SK-N-SH (cell line): ENCODE measurements at regions of chr5 and their contacts with region 1.

Region 1: GRCh38 chr5:38441453-38442246 is 114.8 kb downstream of the LIFR start:
- DNase-seq: peak; percentile 86
- H3K4me3 ChIP-seq: no peak overlapping the region; a peak in 1 of 4 replicates
- H3K27ac ChIP-seq: no peak overlapping the region
- H3K4me1 ChIP-seq: no peaks in the 10 kb centered on the region
- H3K27me3 ChIP-seq: no peaks in the 10 kb centered on the region
- CTCF ChIP-seq: peak; percentile 97
- EP300 ChIP-seq: no peak
- RAD21 ChIP-seq: peak; percentile 99

Region 2: GRCh38 chr5:38265546-38266179 is 176.0 kb before region 1 on chr5:
- CTCF ChIA-PET with region 1: interaction called, 14 read pairs
- POLR2A ChIA-PET with region 1: no interaction called
- DNase-seq: peak; percentile 67
- H3K4me3 ChIP-seq: peak overlapping the region in 1 of 2 experiments; percentile 41; a peak in 2 of 4 replicates
- H3K27ac ChIP-seq: no peak overlapping the region
- H3K4me1 ChIP-seq: peaks cover 0 to 6% of the 10 kb centered on the region in 2 experiments; a peak in 2 of 4 replicates
- H3K27me3 ChIP-seq: peaks cover 25% of the 10 kb centered on the region; the same call in 1 of the 2 replicates
- CTCF ChIP-seq: peak; percentile 83
- EP300 ChIP-seq: no peak
- RAD21 ChIP-seq: peak; percentile 65

Region 3: GRCh38 chr5:38426986-38427950 is 14.4 kb before region 1 on chr5:
- CTCF ChIA-PET with region 1: interaction called, 104 read pairs
- POLR2A ChIA-PET with region 1: no interaction called
- DNase-seq: no peak
- H3K4me3 ChIP-seq: no peak overlapping the region
- H3K27ac ChIP-seq: no peak overlapping the region
- H3K4me1 ChIP-seq: peaks cover 7 to 15% of the 10 kb centered on the region in 2 experiments; a peak in 3 of 4 replicates
- H3K27me3 ChIP-seq: no peaks in the 10 kb centered on the region
- CTCF ChIP-seq: no peak
- EP300 ChIP-seq: no peak
- RAD21 ChIP-seq: no peak

Region 4: DNA sequence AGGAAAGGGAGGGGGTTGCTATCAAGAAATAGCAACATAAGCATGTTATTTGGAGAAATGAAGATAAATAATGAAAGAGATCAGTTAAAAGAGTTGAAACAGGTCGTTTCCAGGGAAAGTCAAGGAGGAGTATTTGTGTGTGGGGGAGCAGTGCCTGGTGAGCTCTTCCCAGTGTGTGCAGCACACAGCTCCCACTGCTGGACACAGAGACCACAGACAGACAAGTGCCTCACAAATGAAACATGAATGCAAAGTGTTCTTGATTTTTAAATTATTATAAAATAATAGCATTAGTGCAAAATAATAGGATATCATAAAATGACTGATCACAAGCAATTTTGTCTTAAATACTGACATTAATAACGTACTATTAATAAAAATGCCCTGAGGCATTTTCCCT is 74.0 kb after region 1 on chr5:
- CTCF ChIA-PET with region 1: interaction called, 11 read pairs
- POLR2A ChIA-PET with region 1: no interaction called
- DNase-seq: peak; percentile 17
- H3K4me3 ChIP-seq: no peak overlapping the region
- H3K27ac ChIP-seq: no peak overlapping the region
- H3K4me1 ChIP-seq: no peaks in the 10 kb centered on the region
- H3K27me3 ChIP-seq: no peaks in the 10 kb centered on the region
- CTCF ChIP-seq: peak; percentile 60
- EP300 ChIP-seq: no peak
- RAD21 ChIP-seq: peak; percentile 53

Region 5: GRCh38 chr5:38562444-38562843 is 120.8 kb after region 1 on chr5:
- CTCF ChIA-PET with region 1: interaction called, 14 read pairs
- POLR2A ChIA-PET with region 1: no interaction called
- DNase-seq: peak; percentile 25
- H3K4me3 ChIP-seq: no peak overlapping the region
- H3K27ac ChIP-seq: no peak overlapping the region; a peak in 2 of 4 replicates
- H3K4me1 ChIP-seq: peaks cover 0 to 4% of the 10 kb centered on the region in 2 experiments; a peak in 2 of 4 replicates
- H3K27me3 ChIP-seq: no peaks in the 10 kb centered on the region
- CTCF ChIP-seq: no peak
- EP300 ChIP-seq: no peak
- RAD21 ChIP-seq: no peak

Region 6: GRCh38 chr5:38809388-38810359 is 368.0 kb after region 1 on chr5:
- CTCF ChIA-PET with region 1: interaction called, 338 read pairs
- POLR2A ChIA-PET with region 1: interaction called, 3 read pairs
- DNase-seq: peak; percentile 87
- H3K4me3 ChIP-seq: no peak overlapping the region
- H3K27ac ChIP-seq: peak overlapping the region; percentile 21 to 22; a peak in 3 of 4 replicates
- H3K4me1 ChIP-seq: peaks cover 15 to 21% of the 10 kb centered on the region in 2 experiments
- H3K27me3 ChIP-seq: no peaks in the 10 kb centered on the region
- CTCF ChIP-seq: peak; percentile 87
- EP300 ChIP-seq: 0 out of 4 replicates have a peak, but pooled peaks of 1 of the 2 experiments have one; percentile 8
- RAD21 ChIP-seq: peak; percentile 99

Region 7: DNA sequence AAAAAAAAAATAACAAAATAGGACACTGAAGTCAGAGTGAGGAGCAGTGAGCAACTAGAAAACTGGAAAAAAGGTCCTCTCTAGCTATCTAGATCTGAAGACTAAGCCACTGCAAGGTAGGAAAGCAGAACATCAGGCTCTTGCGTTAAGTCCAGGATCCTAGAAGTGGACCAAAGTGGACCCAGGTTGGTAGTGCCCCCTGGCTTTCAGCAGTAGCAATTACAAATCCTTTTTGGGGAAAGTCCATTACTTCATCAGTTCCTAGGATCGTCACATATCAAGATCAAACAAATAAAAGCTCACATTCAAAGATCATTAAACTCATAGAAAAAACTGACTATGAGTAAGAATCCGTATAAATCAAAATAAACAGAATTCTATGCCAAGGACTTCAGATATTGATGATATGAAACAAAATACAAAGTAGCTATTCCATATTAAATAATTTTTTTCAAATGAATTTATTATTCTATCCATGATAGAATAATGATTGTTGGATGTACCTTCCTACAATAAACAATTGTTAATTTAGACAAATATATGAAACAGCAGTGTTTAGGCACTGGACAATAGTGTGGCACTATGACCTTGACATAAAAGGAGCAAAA is 639.1 kb after region 1 on chr5:
- CTCF ChIA-PET with region 1: interaction called, 11 read pairs
- POLR2A ChIA-PET with region 1: no interaction called
- DNase-seq: peak; percentile 63
- H3K4me3 ChIP-seq: peak overlapping the region in 1 of 2 experiments; percentile 28; a peak in 1 of 4 replicates
- H3K27ac ChIP-seq: no peak overlapping the region
- H3K4me1 ChIP-seq: peaks cover 0 to 4% of the 10 kb centered on the region in 2 experiments; a peak in 2 of 4 replicates
- H3K27me3 ChIP-seq: no peaks in the 10 kb centered on the region; the same call in 1 of the 2 replicates
- CTCF ChIP-seq: peak; percentile 79
- EP300 ChIP-seq: no peak
- RAD21 ChIP-seq: peak; percentile 77